ENCODE measurements at regions of chr7 and their contacts with region 1.

Region 1: DNA sequence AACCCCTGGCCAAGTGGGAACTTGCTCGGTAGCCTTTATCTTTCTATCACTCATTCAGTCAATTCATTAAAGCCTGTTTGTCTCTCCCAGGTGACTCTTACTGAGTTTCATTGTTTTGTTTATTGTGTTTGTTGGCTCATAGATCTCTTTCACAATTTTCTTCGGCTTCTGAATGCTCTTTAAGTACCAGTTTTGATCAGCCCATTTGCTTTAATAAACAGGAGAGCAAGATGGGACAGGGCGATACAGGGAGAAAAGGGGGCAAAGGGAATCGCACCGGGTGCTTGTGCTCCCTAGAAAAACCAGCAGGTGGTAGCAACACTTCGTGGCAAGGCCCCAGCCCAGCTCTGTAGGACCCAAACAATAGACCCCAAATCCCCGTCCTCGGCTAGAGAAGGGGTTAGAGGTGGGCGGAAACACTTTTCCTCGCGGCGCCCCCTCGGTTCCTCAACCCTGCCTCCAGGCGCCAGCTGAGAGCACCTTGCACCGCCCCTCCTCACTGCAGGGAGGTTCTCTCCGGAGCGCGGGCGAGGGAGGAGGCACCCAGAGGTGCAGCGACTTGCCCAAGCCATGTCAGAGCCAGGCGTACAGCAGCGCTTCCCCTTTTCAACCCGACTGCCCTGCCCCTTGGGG is 1.0 kb upstream of the EPHB6 start:
- DNase-seq: peak; percentile 95
- H3K4me3 ChIP-seq: peak overlapping the region; percentile 67 to 89 (median 78)
- H3K27ac ChIP-seq: peak overlapping the region; percentile 66 to 91 (median 82)
- H3K4me1 ChIP-seq: peaks cover 4 to 38% (median 24%) of the 10 kb centered on the region in 6 donors
- H3K27me3 ChIP-seq: peaks cover 0 to 12% (median 0%) of the 10 kb centered on the region in 7 donors
- CTCF ChIP-seq: peak; percentile 49 to 85 (median 76)
- POLR2A ChIP-seq: peak in 1 of 3 donors; percentile 33

Region 2: GRCh38 chr7:143214789-143215679 is 361.2 kb after region 1 on chr7:
- intact Hi-C with region 1: loop called (anchors 10 kb)
- DNase-seq: no peak
- H3K4me3 ChIP-seq: no peak overlapping the region
- H3K27ac ChIP-seq: no peak overlapping the region
- H3K4me1 ChIP-seq: peaks cover 0 to 8% (median 1%) of the 10 kb centered on the region in 6 donors
- H3K27me3 ChIP-seq: peaks cover 0 to 5% (median 0%) of the 10 kb centered on the region in 7 donors
- CTCF ChIP-seq: peak; percentile 98 to 99 (median 98)
- POLR2A ChIP-seq: no peak

Measured in spleen (tissue), 13 donors.